Naive thymus-derived CD4-positive, alpha-beta T cell (primary cell): ENCODE measurements at regions of chr7 and their contacts with region 1.

Region 1: DNA sequence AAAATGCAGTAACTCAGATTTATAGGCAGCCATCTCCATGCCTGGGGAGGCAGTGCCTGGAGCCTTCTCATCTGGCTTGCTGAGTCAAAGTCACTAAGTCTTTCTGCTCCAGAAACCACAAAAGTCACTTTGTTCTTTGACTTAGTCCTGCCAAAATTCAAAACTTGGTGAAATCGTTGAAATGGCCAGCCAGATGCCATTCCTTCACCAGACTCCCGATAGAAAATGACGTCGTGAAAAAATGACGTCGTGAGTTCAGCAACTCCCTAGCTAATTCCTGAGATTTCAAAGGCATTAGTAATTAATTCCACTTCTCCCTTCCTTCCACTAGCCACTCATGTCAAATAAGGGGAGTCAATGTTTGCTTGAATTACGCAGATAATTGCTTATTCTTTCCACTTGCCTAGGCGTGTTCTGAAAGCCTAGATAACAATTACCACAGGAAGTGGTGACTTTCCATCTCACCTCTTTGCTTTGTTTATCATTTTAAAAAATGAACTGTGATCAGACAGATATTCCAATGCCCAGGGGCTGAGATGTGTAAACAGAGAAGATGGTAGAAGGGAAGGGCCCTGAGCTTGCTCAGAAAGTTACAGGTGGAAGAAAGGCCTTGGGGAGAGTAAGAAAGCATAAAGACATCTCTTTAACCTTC is 48.5 kb upstream of the OSBPL3 start:
- DNase-seq: peak in 8 of 9 donors; percentile 10 to 64 (median 48)
- ATAC-seq: peak; percentile 75
- H3K4me3 ChIP-seq: peak overlapping the region; percentile 17
- H3K4me3 Mint-ChIP-seq: peak overlapping the region in 9 of 10 donors; percentile 10 to 88 (median 67)
- H3K27ac ChIP-seq: peak overlapping the region; percentile 25
- H3K27ac Mint-ChIP-seq: peak overlapping the region; percentile 66 to 93 (median 89)
- H3K4me1 ChIP-seq: peaks cover 23 to 32% of the 10 kb centered on the region in 2 donors
- H3K4me1 Mint-ChIP-seq: peaks cover 21 to 40% (median 27%) of the 10 kb centered on the region in 7 donors
- H3K27me3 ChIP-seq: no peaks in the 10 kb centered on the region
- H3K27me3 Mint-ChIP-seq: peaks cover 0 to 11% (median 0%) of the 10 kb centered on the region in 5 donors

Region 2: DNA sequence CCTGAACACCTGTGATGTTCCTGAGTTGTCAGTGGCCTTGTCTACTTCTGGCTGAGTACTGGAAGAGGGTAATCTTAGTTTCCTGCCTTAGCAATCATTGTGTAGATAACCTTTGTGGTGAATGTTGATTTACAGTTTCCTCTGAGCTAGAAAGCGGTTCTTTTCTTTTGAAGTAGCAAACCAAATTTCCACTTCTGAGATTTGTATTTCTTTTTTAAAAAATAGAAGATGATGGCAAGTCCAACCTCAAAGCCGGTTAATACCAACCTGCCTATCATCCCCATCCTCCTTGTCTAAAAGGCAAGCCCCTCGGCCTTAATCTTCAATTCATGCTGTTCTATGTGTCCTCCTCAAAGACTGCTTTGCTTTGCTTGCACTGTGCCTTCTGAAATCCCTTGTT is 467.7 kb before region 1 on chr7:
- CTCF ChIA-PET with region 1: no interaction called
- POLR2A ChIA-PET with region 1: no interaction called
- intact Hi-C with region 1: loop called in 1 of 2 experiments (anchors 2 kb)
- DNase-seq: peak in 7 of 9 donors; percentile 21 to 67 (median 55)
- ATAC-seq: peak; percentile 85
- H3K4me3 ChIP-seq: no peak overlapping the region
- H3K4me3 Mint-ChIP-seq: peak overlapping the region in 9 of 10 donors; percentile 23 to 74 (median 46)
- H3K27ac ChIP-seq: no peak overlapping the region
- H3K27ac Mint-ChIP-seq: peak overlapping the region; percentile 1 to 77 (median 43)
- H3K4me1 ChIP-seq: peaks cover 0 to 16% of the 10 kb centered on the region in 2 donors
- H3K4me1 Mint-ChIP-seq: peaks cover 10 to 25% (median 22%) of the 10 kb centered on the region in 7 donors
- H3K27me3 ChIP-seq: no peaks in the 10 kb centered on the region
- H3K27me3 Mint-ChIP-seq: peaks cover 0 to 16% (median 0%) of the 10 kb centered on the region in 5 donors

Region 3: GRCh38 chr7:24924375-24924774 is 104.1 kb before region 1 on chr7:
- CTCF ChIA-PET with region 1: no interaction called
- POLR2A ChIA-PET with region 1: no interaction called
- intact Hi-C with region 1: loop called in 1 of 2 experiments (anchors 1 kb)
- DNase-seq: peak in 1 of 9 donors; percentile 10
- ATAC-seq: peak; percentile 54
- H3K4me3 ChIP-seq: no peak overlapping the region
- H3K4me3 Mint-ChIP-seq: peak overlapping the region in 1 of 10 donors; percentile 73
- H3K27ac ChIP-seq: no peak overlapping the region
- H3K27ac Mint-ChIP-seq: peak overlapping the region in 1 of 9 donors; percentile 91
- H3K4me1 ChIP-seq: peaks cover 0 to 16% of the 10 kb centered on the region in 2 donors
- H3K4me1 Mint-ChIP-seq: peaks cover 23 to 89% (median 37%) of the 10 kb centered on the region in 7 donors
- H3K27me3 ChIP-seq: no peaks in the 10 kb centered on the region
- H3K27me3 Mint-ChIP-seq: no peaks in the 10 kb centered on the region

Region 4: GRCh38 chr7:25069900-25070443 is 41.5 kb after region 1 on chr7:
- CTCF ChIA-PET with region 1: no interaction called
- POLR2A ChIA-PET with region 1: no interaction called
- intact Hi-C with region 1: loop called (anchors 2 to 5 kb)
- DNase-seq: peak in 8 of 9 donors; percentile 27 to 63 (median 54)
- ATAC-seq: peak; percentile 74
- H3K4me3 ChIP-seq: no peak overlapping the region
- H3K4me3 Mint-ChIP-seq: no peak overlapping the region
- H3K27ac ChIP-seq: no peak overlapping the region
- H3K27ac Mint-ChIP-seq: no peak overlapping the region
- H3K4me1 ChIP-seq: no peaks in the 10 kb centered on the region
- H3K4me1 Mint-ChIP-seq: peaks cover 0 to 17% (median 0%) of the 10 kb centered on the region in 7 donors
- H3K27me3 ChIP-seq: no peaks in the 10 kb centered on the region
- H3K27me3 Mint-ChIP-seq: no peaks in the 10 kb centered on the region

Region 5: DNA sequence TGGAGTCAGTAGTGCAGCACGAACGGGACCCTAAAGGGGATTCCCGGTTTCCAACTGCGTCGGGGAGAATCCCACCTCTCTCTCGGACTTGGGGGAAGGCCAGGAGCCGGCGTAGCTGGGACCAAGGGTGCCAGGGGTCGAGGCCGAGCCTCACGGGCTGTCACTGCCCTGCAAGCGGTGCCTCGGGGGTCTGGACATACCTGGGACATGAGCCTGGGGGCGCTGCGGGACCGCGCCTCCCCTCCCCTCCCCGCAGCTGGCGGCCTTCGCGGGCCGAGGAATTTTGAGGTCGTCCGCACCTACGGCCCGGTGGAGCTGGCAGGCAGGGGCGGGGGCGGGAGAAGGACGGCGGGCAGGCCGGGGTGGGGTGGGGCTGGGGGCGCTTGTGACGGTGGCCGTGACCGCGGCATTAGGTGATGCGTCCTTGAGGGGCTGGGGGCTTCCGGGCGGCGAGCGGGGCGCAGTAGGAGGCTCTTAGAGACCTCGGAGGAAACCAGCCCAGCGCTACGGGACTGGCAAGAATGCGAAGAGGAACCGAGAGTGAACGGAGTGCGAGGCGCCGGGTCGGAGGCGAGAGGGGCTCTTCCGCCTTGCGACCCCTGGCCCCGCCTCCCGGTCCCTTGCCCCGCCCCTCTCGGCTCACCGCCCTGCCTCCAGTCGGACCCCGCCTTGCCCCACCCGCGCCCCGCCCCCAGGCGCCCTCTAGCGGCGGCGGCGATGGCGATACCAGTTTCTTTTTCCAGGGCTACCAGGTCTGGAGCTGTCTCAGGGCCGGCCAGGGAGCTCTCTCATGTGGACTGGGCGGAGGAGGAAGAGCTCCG is 151.5 kb after region 1 on chr7:
- CTCF ChIA-PET with region 1: no interaction called
- POLR2A ChIA-PET with region 1: no interaction called
- intact Hi-C with region 1: loop called in 1 of 2 experiments (anchors 1 kb)
- DNase-seq: peak; percentile 88 to 99 (median 94)
- ATAC-seq: peak; percentile 99
- H3K4me3 ChIP-seq: peak overlapping the region; percentile 75
- H3K4me3 Mint-ChIP-seq: peak overlapping the region; percentile 82 to 93 (median 88)
- H3K27ac ChIP-seq: peak overlapping the region; percentile 86
- H3K27ac Mint-ChIP-seq: peak overlapping the region; percentile 83 to 96 (median 92)
- H3K4me1 ChIP-seq: peaks cover 6 to 7% of the 10 kb centered on the region in 2 donors
- H3K4me1 Mint-ChIP-seq: peaks cover 13 to 31% (median 22%) of the 10 kb centered on the region in 7 donors
- H3K27me3 ChIP-seq: no peaks in the 10 kb centered on the region
- H3K27me3 Mint-ChIP-seq: peaks cover 0 to 12% (median 0%) of the 10 kb centered on the region in 5 donors